Activated CD4-positive, alpha-beta T cell treated with anti-CD3 and anti-CD28 coated beads, Interleukin-2, amount 10 ng/mL, durations not matched to agents 7 days and 5 days (primary cell): ENCODE measurements at regions of chr12 and their contacts with region 1.

Region 1: GRCh38 chr12:66160704-66161103 is 9.1 kb downstream of the TMBIM4 start:
- DNase-seq: no peak
- H3K4me3 Mint-ChIP-seq: no peak overlapping the region
- H3K27ac Mint-ChIP-seq: no peak overlapping the region
- H3K4me1 Mint-ChIP-seq: peaks cover 34% of the 10 kb centered on the region
- H3K27me3 Mint-ChIP-seq: no peaks in the 10 kb centered on the region

Region 2: DNA sequence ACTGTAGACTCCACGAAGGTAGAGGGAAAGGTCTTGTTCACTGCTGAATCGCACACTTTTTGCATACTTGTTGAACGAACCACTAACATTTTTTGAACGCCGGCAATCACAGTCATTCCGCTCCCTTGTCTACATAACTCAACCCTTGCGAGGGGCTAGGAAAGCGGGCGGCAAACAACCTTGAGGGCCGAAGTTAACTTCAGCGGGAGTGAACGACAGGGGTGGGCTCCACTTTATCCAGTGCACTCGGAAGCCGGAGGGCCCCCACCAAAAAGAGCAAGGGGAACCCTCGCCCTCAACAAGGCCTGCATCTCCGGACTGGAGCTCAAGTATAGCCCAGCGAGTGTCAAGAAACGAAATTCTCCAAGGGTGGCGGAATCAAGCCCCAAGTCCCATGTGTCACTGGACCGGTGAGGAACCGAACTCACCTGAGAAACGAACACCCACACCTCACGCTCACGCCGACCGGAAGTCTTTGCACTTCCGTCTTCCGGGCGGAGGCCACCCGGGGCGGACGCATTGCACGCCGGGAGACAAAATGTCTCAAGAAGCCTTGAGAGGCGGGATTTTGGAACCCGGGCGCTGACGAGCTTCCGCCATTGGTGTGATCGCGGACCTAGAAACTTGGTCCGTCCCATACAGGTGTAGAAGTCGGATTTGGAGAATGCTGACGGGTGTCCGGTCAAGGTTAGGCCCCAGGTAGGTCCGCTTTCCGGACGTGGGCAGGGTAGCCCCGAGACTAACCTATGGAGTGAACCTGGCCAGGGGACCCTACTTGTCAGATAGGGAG is 30.2 kb before region 1 on chr12 and contains the start of gene LLPH:
- CTCF ChIA-PET with region 1: interaction called, 10 read pairs
- POLR2A ChIA-PET with region 1: no interaction called
- DNase-seq: peak; percentile 94
- H3K4me3 Mint-ChIP-seq: peak within 1 kb of the TSS; percentile 94
- H3K27ac Mint-ChIP-seq: peak within 1 kb of the TSS; percentile 98
- H3K4me1 Mint-ChIP-seq: peaks cover 58% of the 10 kb centered on the region
- H3K27me3 Mint-ChIP-seq: no peaks in the 10 kb centered on the region
- total RNA-seq, gene LLPH: 33.3 to 38.6 TPM

Region 3: DNA sequence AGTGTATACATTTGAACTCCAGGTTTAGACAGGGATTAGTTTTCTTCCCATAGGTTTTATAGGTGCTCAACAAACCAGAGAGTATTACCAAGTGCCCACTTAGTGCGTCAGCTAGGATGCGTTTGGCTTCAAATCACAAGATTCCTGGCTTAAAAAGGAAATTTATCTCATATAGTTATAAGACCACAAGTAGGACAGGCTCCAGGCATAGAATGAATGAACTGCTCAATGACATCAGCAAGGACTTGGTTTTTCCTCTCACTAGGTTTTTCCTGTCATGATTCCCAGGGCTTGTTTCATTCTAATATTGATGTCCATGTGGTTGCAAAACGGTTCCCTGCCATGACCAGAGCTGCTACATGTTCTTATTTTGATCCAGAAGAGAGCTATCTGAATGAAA is 22.3 kb after region 1 on chr12:
- CTCF ChIA-PET with region 1: no interaction called
- POLR2A ChIA-PET with region 1: no interaction called
- DNase-seq: no peak
- H3K4me3 Mint-ChIP-seq: no peak overlapping the region
- H3K27ac Mint-ChIP-seq: no peak overlapping the region
- H3K4me1 Mint-ChIP-seq: peaks cover 7% of the 10 kb centered on the region
- H3K27me3 Mint-ChIP-seq: peaks cover 32% of the 10 kb centered on the region

Region 4: DNA sequence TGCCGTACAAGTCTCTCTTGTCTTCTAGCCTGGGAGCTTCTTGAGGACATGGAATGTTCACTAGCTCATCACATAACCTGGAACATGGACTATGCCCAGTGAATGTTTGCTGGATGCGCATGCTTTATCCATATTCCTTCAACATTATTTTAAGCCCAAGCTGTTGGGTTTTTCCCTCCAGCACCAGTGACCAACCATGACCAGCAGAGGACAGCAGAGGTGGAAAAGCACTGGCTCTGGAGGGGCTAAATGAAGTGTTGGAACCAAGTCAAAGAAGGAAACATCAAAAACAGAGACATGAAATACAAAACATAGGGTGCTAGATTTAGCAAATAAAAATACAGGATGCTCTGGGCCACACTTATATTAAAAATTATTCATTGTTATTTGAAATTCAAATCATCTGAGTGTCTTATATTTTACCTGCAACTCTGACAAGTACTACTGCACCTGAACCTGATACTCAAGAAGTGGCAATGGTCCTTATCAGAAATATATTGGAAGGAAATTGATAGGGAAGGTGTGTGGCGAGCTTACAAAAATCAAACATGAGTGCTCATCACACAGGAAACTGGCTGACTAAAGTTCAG is 118.5 kb after region 1 on chr12:
- CTCF ChIA-PET with region 1: no interaction called
- POLR2A ChIA-PET with region 1: no interaction called
- DNase-seq: peak; percentile 61
- H3K4me3 Mint-ChIP-seq: no peak overlapping the region
- H3K27ac Mint-ChIP-seq: no peak overlapping the region
- H3K4me1 Mint-ChIP-seq: peaks cover 31% of the 10 kb centered on the region
- H3K27me3 Mint-ChIP-seq: no peaks in the 10 kb centered on the region